Pancreas (tissue), 10 donors: ENCODE measurements at regions of chr5 and their contacts with region 1.

Region 1: DNA sequence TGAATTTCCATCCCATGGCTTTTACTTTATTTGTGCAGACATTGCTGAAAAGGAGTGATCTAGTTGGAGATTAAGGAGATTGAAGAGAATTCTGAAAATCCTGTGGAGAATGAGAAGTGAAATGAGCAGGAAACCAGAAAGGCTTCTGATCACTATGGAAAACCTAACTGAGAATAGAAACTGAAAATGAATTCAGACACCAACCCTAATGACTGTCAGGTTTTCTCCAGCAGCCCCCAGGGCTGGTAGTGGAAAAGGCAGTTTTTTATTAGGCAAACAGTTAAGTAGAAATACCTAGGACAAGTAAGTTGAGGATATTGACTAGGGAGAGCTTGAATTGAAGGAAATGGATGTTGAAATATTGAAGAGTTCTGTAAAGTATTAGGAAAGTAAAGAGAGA is 14.7 kb upstream of the ARRDC3 start:
- DNase-seq: no peak
- ATAC-seq: no peak
- H3K4me3 ChIP-seq: no peak overlapping the region
- H3K27ac ChIP-seq: no peak overlapping the region
- H3K4me1 ChIP-seq: no peaks in the 10 kb centered on the region
- H3K27me3 ChIP-seq: no peaks in the 10 kb centered on the region
- CTCF ChIP-seq: no peak

Region 2: GRCh38 chr5:90854169-90854568 is 543.6 kb before region 1 on chr5:
- intact Hi-C with region 1: loop called in 1 of 3 experiments (anchors 10 kb)
- DNase-seq: no peak
- ATAC-seq: peak in 1 of 4 donors; percentile 26
- H3K4me3 ChIP-seq: no peak overlapping the region
- H3K27ac ChIP-seq: no peak overlapping the region
- H3K4me1 ChIP-seq: no peaks in the 10 kb centered on the region
- H3K27me3 ChIP-seq: no peaks in the 10 kb centered on the region
- CTCF ChIP-seq: no peak

Region 3: GRCh38 chr5:91225848-91226686 is 171.7 kb before region 1 on chr5:
- intact Hi-C with region 1: loop called in 1 of 3 experiments (anchors 10 kb)
- DNase-seq: peak; percentile 28 to 66 (median 46)
- ATAC-seq: peak; percentile 73 to 94 (median 91)
- H3K4me3 ChIP-seq: no peak overlapping the region
- H3K27ac ChIP-seq: no peak overlapping the region
- H3K4me1 ChIP-seq: peaks cover 0 to 13% (median 0%) of the 10 kb centered on the region in 3 donors
- H3K27me3 ChIP-seq: no peaks in the 10 kb centered on the region
- CTCF ChIP-seq: peak in 3 of 4 donors; percentile 28 to 37 (median 35)

Region 4: DNA sequence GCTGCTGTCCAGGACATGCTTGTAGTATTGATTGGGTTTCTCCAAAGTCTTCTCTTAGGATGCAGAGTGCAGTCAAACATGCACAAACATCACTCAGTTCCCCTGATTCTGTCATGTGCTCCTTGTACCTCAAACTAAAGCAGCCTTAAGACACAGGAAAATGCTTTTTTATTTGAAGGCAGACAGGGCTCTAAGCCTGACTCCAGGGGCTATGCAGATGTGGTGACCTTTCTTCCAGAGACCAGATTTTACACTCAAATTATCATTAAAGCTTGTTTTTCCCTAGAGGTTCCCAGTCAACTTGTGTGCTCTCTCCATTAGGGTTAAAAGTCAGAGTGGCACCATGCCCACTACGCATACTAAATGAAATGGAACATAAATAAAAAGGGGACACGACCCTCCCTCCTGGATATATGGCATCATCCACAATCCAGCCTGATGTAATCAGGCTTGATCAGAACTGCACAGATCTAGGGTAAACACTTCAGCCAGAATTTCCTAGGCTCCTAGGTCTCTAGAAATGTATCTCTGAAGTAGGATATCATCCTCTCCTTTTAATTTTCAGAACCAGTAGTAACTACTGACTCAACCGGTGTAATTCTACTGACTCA is 1412.2 kb after region 1 on chr5:
- intact Hi-C with region 1: no loop called
- DNase-seq: no peak
- ATAC-seq: no peak
- H3K4me3 ChIP-seq: no peak overlapping the region
- H3K27ac ChIP-seq: no peak overlapping the region
- H3K4me1 ChIP-seq: no peaks in the 10 kb centered on the region
- H3K27me3 ChIP-seq: no peaks in the 10 kb centered on the region
- CTCF ChIP-seq: no peak